GM18951 (cell line): ENCODE measurements at regions of chr7 and their contacts with region 1.

Region 1: DNA sequence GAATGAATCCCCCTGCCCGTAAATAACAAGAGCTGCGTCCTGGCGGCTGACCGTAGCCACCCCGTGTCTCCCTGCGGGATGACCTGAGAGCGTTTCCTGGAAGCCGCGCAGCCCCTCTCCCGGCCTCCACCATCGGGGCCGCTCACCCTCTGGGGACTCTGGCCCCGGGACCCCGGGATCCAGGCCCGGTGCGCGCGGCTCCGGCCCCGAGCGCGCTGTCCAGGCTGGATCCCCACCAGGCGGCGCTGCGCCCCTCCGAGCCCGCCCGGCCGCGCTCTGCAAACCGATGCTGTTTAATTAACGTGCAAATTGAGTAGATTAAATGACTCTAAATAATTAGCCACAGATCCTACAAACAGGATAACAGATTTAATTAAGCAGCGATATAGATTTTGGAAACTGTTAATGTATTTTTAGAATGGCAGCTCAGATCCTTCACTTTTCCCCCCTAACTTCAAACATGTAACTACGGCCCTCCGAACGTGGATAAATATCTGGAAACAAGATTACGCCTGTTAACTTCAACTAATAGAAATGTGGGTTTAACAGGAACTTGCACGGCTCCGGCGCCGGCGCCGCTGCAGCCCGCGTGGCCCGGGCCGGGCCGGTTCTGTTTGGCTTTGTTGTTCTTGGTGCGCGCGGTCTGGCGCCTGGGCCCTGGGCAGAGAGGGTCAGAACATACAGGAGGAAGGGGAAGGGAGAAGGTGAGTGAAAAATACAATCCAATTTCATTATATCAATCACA is 7.1 kb upstream of the UNCX start:
- POLR2A ChIP-seq: no peak

Region 2: DNA sequence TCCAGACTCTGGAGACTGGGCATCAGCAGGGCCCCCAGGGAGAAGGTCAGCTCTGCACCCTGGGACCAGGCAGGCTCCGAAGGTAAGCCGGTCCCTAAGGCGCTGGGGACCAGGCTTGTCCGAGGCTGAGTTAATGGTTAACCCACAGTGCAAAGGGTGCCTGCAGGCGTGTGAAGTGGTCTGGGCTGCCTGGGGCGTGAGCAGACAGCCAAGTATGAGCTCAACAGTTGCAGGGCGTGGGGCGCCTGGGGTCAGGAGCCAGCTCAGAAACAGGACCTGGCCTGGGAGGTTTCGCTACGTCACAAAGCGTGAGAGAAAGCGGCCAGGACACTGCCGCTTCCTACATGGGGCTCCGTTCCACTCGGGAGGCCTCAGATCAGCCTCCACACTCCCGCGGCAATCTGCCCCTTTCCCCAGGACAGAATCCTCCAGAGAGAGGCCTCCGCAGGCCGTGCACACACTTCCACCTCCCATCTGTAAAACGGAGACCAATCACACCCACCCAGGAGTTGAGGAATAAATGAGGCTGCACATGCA is 722.0 kb before region 1 on chr7:
- in situ Hi-C with region 1: no loop called
- POLR2A ChIP-seq: no peak

Region 3: DNA sequence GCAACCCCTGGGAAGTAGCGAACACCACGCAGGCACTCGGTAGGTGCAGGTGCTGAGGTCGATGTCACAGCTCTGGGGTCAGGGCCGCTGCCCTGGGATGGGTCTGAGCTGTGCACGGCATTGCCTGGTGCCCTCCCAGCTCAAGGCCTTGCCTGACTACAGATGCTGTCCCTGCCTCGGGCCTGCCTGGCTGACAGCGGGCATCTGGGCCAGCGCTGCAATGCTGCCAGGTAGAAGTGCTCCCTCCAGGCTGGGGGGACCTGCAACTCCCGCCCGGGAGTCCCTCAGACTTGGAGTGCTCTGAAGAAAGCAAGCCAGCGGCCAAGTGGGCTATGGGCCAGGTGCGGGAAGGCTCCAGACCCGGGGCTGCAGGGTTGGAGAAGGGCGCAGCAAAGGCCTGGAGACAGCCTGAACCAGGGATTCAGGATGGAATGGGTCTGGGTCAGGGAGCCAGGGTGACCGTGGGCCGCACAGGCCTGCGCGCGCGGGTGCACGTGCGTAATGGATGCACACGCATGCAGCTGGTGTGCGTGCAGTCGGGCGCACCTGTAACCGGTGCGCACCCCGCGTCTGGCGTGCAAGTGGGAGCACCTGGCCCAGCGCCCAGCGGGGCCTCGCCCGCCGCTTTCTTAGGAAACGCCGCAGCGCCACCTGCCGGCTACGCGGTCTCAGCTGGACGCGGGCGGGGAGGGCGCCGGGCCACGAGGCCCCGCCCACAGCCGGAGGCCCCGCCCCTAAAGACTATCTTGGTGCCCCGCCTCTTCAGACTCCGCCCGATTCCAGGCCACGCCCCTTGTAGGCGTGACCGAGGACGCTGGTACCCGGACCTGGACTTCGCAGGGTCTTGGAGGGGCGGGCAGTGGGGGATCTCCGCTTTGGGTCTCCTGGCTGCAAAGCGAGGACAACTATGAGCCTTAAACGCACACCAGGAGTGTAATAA is 187.0 kb after region 1 on chr7:
- in situ Hi-C with region 1: loop called (anchors 25 kb)
- POLR2A ChIP-seq: no peak